CD8-positive, alpha-beta T cell (primary cell): ENCODE measurements at regions of chr16 and their contacts with region 1.

Region 1: GRCh38 chr16:69761983-69762813 is at the start of gene WWP2:
- DNase-seq: peak; percentile 54 to 92 (median 77)
- ATAC-seq: peak; percentile 81
- H3K4me3 ChIP-seq: peak within 1 kb of the TSS; percentile 91 to 100
- H3K4me3 Mint-ChIP-seq: peak within 1 kb of the TSS; percentile 94
- H3K27ac ChIP-seq: peak within 1 kb of the TSS; percentile 97 to 99
- H3K27ac Mint-ChIP-seq: peak within 1 kb of the TSS; percentile 98
- H3K4me1 ChIP-seq: peaks cover 17% of the 10 kb centered on the region
- H3K4me1 Mint-ChIP-seq: peaks cover 31% of the 10 kb centered on the region
- H3K27me3 ChIP-seq: no peaks in the 10 kb centered on the region
- H3K27me3 Mint-ChIP-seq: no peaks in the 10 kb centered on the region
- CTCF ChIP-seq: no peak
- total RNA-seq, gene WWP2: 36.7 to 36.9 TPM

Region 2: DNA sequence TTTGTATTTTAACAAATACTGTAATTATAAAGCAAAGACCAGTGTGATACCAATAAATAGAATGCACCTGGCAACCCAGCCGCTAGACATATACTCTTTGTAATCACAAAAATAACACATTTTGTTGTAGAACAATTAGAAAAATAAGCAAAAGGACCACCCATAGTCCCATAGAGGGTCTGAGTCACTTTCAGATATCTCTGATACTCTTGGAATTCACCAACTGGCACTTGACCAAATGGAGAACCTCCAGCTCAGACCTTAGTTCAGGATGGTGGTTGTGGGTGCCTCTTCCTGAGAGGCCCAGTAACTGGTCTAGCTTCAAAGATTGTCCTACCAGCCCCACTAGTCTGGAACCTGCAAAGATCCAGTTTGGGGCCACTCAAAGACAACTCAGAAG is 375.6 kb before region 1 on chr16:
- CTCF ChIA-PET with region 1: no interaction called
- POLR2A ChIA-PET with region 1: no interaction called
- intact Hi-C with region 1: loop called in 1 of 2 experiments (anchors 5 kb)
- DNase-seq: no peak
- ATAC-seq: no peak
- H3K4me3 ChIP-seq: peak overlapping the region in 1 of 2 experiments; percentile 46
- H3K4me3 Mint-ChIP-seq: peak overlapping the region; percentile 89
- H3K27ac ChIP-seq: peak overlapping the region in 1 of 2 experiments; percentile 55
- H3K27ac Mint-ChIP-seq: no peak overlapping the region
- H3K4me1 ChIP-seq: peaks cover 12% of the 10 kb centered on the region
- H3K4me1 Mint-ChIP-seq: peaks cover 30% of the 10 kb centered on the region
- H3K27me3 ChIP-seq: no peaks in the 10 kb centered on the region
- H3K27me3 Mint-ChIP-seq: no peaks in the 10 kb centered on the region
- CTCF ChIP-seq: no peak

Region 3: GRCh38 chr16:70151391-70151790 is 389.2 kb after region 1 on chr16:
- CTCF ChIA-PET with region 1: no interaction called
- POLR2A ChIA-PET with region 1: no interaction called
- intact Hi-C with region 1: no loop called
- DNase-seq: no peak
- ATAC-seq: no peak
- H3K4me3 ChIP-seq: no peak overlapping the region
- H3K4me3 Mint-ChIP-seq: no peak overlapping the region
- H3K27ac ChIP-seq: no peak overlapping the region
- H3K27ac Mint-ChIP-seq: peak overlapping the region; percentile 13
- H3K4me1 ChIP-seq: no peaks in the 10 kb centered on the region
- H3K4me1 Mint-ChIP-seq: no peaks in the 10 kb centered on the region
- H3K27me3 ChIP-seq: no peaks in the 10 kb centered on the region
- H3K27me3 Mint-ChIP-seq: no peaks in the 10 kb centered on the region
- CTCF ChIP-seq: no peak